Activated T-helper 1 cell treated with anti-CD3 and anti-CD28 coated beads, Interleukin-12 subunit alpha, Interleukin-12 subunit beta, Interleukin-2, Interleukin-4 antibody, amounts not matched to agents 30 ng/mL and 10 ng/mL and 1 ng/mL, durations not matched to agents 14 hours and 24 hours and 36 hours (primary cell): ENCODE measurements at regions of chr16 and their contacts with region 1.

Region 1: DNA sequence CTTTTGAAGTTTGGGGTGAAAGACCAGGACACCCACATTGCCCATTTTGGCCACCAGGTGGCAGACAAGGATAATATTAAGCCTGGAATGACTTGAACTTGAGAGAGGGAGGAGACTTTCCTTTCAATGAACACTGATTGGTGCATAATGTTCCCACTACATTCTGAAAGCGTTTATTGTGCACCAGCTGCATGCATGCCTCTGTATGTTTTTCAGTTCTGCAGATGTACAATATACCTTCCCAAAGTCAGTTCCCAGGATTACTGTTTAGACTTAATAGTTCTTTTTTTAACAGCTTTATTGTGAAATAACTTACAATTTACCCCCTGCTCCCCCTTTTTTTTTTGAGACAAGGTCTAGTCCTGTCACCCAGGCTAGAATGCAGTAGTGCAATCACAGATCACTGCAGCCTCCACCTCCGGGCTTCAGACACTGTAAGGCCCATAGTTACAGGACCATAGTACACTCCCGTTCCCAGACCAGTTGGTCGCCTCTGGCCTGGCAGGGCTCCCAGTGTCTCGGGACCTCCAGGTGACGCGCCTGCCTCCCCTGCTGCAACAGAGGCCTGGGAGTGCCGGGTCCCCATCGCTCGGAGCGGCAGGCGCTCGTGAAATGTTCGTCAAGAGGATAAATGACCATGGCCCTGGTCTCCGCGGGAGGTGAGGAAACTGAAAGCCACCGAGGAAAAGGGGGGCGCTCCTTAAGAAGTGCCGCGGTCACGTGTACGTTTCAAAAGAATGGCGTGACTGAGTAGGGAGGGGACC is 12.2 kb downstream of the CES2 start:
- DNase-seq: peak; percentile 78
- H3K4me3 Mint-ChIP-seq: peak overlapping the region; percentile 87
- H3K27ac Mint-ChIP-seq: no peak overlapping the region
- H3K4me1 Mint-ChIP-seq: peaks cover 24% of the 10 kb centered on the region
- H3K27me3 Mint-ChIP-seq: peaks cover 19% of the 10 kb centered on the region

Region 2: DNA sequence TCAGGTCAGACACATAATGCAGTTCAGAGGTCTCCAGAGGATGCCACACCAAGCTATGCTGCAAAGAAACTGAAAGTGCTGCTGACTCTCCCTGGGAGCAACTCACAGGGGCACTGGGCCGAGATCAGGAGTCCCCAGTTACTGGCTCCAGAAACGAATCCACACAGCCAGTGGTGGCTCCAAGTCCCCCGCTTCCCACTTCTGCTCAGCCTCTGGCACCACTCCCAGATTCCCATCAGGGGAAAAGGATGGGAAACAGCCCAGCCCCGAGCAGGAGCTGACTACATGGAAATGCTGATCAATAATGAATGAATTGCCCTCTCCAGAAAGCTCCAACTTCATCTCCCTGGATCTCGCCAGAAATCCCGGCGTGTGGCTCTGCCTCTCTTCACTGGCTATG is 643.3 kb before region 1 on chr16:
- intact Hi-C with region 1: no loop called
- DNase-seq: no peak
- H3K4me3 Mint-ChIP-seq: no peak overlapping the region
- H3K27ac Mint-ChIP-seq: no peak overlapping the region
- H3K4me1 Mint-ChIP-seq: peaks cover 8% of the 10 kb centered on the region
- H3K27me3 Mint-ChIP-seq: peaks cover 2% of the 10 kb centered on the region

Region 3: DNA sequence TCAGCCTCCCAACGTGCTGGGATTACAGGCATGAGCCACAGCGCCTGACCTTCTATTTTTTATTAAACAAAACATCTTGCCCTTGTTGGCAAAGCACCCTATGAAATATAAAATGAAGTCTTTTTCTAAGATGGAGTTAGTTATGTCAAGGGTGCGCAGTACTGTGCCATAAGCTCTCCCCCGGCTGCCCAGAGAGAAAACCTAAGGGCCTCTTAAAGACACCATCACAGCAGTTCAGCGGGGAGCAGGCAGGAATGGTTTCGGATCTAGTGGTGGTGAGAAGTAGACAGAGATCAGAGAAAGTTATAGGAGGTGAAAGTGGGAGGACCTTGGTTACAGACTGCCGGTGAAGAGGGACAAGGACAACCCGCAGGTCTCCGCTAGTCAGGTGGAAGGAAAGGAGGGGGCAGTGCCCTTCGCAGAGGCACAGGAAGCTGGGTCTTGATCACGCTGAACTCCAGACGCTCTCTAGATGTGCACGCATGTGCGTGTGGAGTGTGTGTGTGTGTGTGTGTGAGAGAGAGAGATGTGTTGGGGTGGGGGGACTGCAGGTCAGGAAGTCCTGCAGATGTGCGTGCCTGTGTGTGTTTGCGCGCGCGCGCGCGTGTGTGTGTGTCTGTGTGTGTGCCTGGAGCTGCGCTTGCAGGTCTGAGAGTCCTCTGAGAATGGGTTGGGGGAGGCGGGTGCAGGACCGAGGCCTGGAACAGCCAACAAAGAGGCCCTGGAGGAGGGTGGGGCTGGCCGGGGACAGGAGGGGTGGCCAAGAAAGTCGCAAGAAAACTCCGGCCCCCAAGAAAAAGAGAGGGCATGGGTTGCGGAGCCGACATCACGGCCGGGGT is 343.7 kb before region 1 on chr16:
- intact Hi-C with region 1: no loop called
- DNase-seq: peak; percentile 72
- H3K4me3 Mint-ChIP-seq: peak overlapping the region; percentile 84
- H3K27ac Mint-ChIP-seq: peak overlapping the region; percentile 93
- H3K4me1 Mint-ChIP-seq: peaks cover 45% of the 10 kb centered on the region
- H3K27me3 Mint-ChIP-seq: no peaks in the 10 kb centered on the region

Region 4: DNA sequence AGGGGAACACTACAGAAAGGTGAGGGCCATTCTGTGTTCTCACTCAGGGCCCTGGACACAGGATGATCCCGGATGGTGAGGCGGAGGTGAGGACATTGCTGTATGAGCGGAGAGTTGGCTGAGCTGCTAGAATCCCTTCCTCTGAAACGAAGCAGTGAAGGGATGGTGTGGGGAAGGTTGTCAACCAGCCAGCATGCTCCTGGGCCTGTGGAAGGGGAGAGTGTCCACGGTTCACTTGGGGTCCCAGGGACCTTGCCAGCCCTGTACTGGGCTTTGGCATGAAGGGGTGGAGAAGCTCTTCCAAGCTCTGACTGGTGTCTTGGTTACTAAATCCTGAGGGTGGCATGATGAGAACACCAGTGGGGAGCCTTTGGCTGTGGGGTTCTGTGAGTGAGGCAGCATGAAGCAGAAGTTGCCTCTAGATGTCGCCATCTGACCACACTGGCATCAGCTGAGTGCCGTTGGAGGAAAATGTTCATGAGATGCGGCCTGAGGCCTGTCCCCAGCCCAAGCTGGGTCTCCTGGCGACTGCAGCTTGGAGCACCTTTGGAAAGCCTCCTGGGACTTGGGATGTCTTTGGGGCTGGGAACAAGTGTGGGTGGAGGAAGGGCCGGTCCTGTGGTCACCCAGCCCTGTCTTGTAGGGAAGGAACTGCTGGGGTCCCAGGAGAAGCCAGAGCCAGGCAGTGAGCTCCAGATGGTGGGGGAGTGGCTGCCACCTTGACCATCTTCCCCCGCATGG is 52.4 kb before region 1 on chr16:
- intact Hi-C with region 1: loop called (anchors 1 kb)
- DNase-seq: peak; percentile 44
- H3K4me3 Mint-ChIP-seq: no peak overlapping the region
- H3K27ac Mint-ChIP-seq: peak overlapping the region; percentile 4
- H3K4me1 Mint-ChIP-seq: peaks cover 24% of the 10 kb centered on the region
- H3K27me3 Mint-ChIP-seq: no peaks in the 10 kb centered on the region

Region 5: DNA sequence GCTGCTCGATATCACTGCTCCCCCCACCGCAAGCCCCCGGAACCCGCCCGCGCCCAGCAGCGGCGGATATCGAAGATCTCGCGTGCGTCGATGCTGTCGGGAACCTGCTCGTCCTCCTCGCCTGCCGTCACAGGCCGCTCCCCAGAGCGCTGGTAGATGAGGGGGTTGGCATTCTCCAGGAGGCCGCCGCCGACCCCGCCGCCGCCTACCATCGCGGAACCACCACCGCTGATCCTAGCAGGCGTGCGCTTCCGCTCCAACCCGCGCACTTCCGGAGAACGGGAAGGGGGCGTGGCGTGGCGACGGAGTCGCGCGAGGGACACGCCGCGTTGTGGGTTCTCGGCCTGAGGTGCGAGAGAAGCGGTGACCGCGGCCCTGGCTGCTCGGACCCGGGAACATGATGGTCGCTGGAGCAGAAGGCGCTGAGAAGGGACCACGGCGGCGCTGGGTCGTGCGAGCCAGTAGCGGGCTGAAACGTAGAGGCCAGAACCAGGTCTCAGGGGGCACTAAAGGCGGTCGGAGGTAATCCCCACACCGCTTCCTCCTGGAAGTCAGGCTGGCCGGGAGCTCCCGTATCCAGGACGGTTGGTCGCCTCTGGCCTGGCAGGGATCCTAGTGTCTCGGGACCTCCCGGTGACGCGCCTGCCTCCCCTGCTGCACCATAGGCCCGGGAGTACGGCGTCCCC is 13.2 kb before region 1 on chr16 and contains the start of gene CIAO2B:
- intact Hi-C with region 1: loop called (anchors 1 kb)
- DNase-seq: peak; percentile 88
- H3K4me3 Mint-ChIP-seq: peak within 1 kb of the TSS; percentile 96
- H3K27ac Mint-ChIP-seq: peak within 1 kb of the TSS; percentile 87
- H3K4me1 Mint-ChIP-seq: peaks cover 53% of the 10 kb centered on the region
- H3K27me3 Mint-ChIP-seq: no peaks in the 10 kb centered on the region
- total RNA-seq, gene CIAO2B: 162 and 164 TPM in 2 replicates

Region 6: DNA sequence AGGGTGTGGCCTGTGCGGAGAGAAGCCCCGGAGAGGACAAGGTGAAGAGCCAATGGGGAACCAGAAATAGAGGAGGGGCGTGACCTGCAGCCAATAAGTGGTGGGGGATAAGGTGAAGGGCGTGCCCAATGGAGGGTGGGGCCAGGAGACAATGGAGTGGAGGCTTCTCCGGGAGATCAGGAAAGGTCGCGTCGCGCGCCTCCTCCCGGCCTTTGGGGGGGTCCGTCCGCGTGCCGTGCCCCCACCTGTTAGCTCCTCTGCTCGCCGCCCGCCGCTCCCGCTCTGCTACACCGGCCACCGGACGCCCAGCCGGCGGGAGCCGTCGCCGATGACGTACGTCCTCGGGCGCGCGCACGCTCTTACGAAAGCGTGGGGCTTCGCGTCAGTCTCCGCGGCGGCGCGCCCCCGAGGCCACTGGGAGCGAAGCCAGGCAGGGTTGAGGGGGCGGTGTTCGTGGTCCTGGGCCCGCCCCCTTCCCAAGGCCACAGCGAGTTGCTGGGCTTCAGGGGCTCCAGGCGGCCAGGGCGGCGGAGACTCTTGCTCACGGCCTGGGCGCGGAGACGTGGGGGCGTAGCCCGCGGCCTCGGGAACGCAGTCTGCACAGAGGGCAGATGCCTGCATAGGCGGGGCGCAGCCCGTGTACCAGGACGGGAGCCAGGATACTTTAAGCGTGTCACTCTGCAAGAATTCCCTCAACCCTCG is 236.3 kb after region 1 on chr16 and contains the start of gene MATCAP1:
- intact Hi-C with region 1: loop called (anchors 2 kb)
- DNase-seq: peak; percentile 94
- H3K4me3 Mint-ChIP-seq: peak within 1 kb of the TSS; percentile 62
- H3K27ac Mint-ChIP-seq: no peak within 1 kb of the TSS
- H3K4me1 Mint-ChIP-seq: peaks cover 20% of the 10 kb centered on the region
- H3K27me3 Mint-ChIP-seq: peaks cover 8% of the 10 kb centered on the region
- total RNA-seq, gene MATCAP1: 45.5 and 48.2 TPM in 2 replicates